Heart left ventricle (tissue), 16 donors: ENCODE measurements at regions of chr6 and their contacts with region 1.

Region 1: GRCh38 chr6:137700751-137701477 is 166.1 kb upstream of the TNFAIP3 start:
- DNase-seq: no peak
- ATAC-seq: peak in 2 of 4 donors; percentile 8 to 18
- H3K4me3 ChIP-seq: no peak overlapping the region
- H3K27ac ChIP-seq: peak overlapping the region in 7 of 12 donors; percentile 28 to 89 (median 79)
- H3K4me1 ChIP-seq: peaks cover 0 to 64% (median 34%) of the 10 kb centered on the region in 12 donors
- H3K27me3 ChIP-seq: no peaks in the 10 kb centered on the region
- CTCF ChIP-seq: no peak
- POLR2A ChIP-seq: no peak

Region 2: DNA sequence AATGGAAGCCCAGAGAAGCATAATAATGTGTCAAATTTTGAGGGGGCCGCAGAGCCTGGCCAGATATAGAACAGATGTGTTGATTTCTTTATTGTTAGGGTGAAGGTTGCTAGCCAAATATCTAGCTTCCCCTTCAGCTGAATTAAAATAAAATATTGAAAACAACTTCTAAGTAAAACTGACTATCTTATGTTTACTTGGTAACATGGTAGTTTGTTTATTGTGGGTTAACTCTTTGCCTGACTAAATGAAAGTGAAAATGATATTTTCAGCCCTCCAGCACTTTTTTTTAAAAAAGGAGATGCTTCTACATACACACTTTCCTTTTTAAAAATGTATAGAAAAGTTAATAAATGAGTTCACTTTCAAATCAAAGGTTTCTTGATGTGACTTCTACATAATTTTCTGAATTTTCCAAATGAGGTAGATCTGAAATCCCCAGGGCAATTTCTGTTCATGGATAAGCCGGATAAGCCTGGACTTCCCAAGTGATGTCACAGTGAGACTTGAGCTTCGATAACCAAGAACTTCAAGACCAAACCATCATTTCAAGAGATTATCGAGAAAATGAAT is 34.6 kb before region 1 on chr6:
- intact Hi-C with region 1: loop called in 1 of 10 experiments (anchors 5 kb)
- DNase-seq: no peak
- ATAC-seq: no peak
- H3K4me3 ChIP-seq: no peak overlapping the region
- H3K27ac ChIP-seq: no peak overlapping the region
- H3K4me1 ChIP-seq: no peaks in the 10 kb centered on the region
- H3K27me3 ChIP-seq: no peaks in the 10 kb centered on the region
- CTCF ChIP-seq: no peak
- POLR2A ChIP-seq: no peak